ENCODE measurements at regions of chr1 and their contacts with region 1.

Region 1: DNA sequence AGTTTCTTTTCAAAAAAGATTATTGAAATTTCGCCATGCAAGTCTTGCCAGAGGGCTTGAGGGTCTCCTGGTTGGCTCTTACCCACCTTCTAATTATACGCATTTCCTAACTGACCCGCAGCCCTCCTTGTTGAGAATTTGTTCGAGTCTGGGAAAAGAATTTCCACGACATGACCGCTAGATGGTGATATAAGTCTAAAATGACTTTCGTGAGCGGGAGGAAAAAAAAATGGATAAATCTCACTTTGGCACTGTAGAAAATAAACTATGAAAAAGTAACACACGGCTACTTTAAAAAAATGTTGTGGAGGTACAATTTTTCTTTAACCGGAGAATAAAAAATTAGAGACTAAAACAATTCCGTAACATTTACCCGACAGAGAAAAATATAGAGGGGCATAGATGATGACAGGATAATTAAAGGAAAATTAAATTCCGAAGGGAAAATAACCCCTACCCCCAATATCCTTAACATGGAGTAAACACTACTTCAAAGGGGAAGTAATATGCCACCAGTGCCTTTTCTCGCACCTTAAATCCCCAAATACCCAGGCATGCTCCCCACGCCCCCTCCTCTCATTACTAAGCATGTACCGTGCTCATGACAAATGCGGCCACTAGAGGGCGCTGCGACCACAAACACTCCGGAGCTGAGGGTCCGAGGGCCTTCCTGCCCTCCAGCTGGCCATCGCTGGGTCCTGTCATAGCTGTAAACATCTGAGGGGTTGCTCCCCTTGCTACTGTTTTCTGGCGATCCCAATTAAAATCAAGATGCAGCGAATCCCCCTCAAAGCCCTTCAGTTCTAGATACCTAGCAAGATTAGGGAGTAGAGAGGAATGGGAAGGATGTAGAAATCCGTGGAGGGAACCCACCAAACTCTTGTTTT is 266.9 kb downstream of the ASTN1 start:
- DNase-seq: peak; percentile 18
- H3K4me3 ChIP-seq: no peak overlapping the region
- H3K27ac ChIP-seq: no peak overlapping the region
- H3K27me3 ChIP-seq: no peaks in the 10 kb centered on the region
- CTCF ChIP-seq: peak; percentile 81

Region 2: GRCh38 chr1:177355595-177355994 is 458.0 kb after region 1 on chr1:
- CTCF ChIA-PET with region 1: interaction called, 93 read pairs
- POLR2A ChIA-PET with region 1: no interaction called
- DNase-seq: peak; percentile 6
- H3K4me3 ChIP-seq: no peak overlapping the region
- H3K27ac ChIP-seq: no peak overlapping the region
- H3K27me3 ChIP-seq: peaks cover 2% of the 10 kb centered on the region
- CTCF ChIP-seq: peak; percentile 67

Measured in AG04450 (cell line).